ENCODE measurements at regions of chr5 and their contacts with region 1.

Region 1: GRCh38 chr5:56358703-56359681 is 125.9 kb upstream of the ANKRD55 start:
- DNase-seq: peak; percentile 85
- H3K4me3 Mint-ChIP-seq: peak overlapping the region; percentile 24
- H3K27ac Mint-ChIP-seq: peak overlapping the region; percentile 87
- H3K4me1 Mint-ChIP-seq: peaks cover 55% of the 10 kb centered on the region
- H3K27me3 Mint-ChIP-seq: no peaks in the 10 kb centered on the region
- CTCF ChIP-seq: no peak

Region 2: GRCh38 chr5:56270568-56271392 is 88.2 kb before region 1 on chr5:
- CTCF ChIA-PET with region 1: interaction called, 4 read pairs
- intact Hi-C with region 1: loop called (anchors 2 kb)
- DNase-seq: peak; percentile 88
- H3K4me3 Mint-ChIP-seq: no peak overlapping the region
- H3K27ac Mint-ChIP-seq: peak overlapping the region; percentile 81
- H3K4me1 Mint-ChIP-seq: peaks cover 25% of the 10 kb centered on the region
- H3K27me3 Mint-ChIP-seq: no peaks in the 10 kb centered on the region
- CTCF ChIP-seq: peak; percentile 95

Region 3: GRCh38 chr5:56328753-56329560 is 30.0 kb before region 1 on chr5:
- CTCF ChIA-PET with region 1: no interaction called
- intact Hi-C with region 1: loop called (anchors 2 kb)
- DNase-seq: peak; percentile 47
- H3K4me3 Mint-ChIP-seq: peak overlapping the region; percentile 9
- H3K27ac Mint-ChIP-seq: peak overlapping the region; percentile 90
- H3K4me1 Mint-ChIP-seq: peaks cover 67% of the 10 kb centered on the region
- H3K27me3 Mint-ChIP-seq: no peaks in the 10 kb centered on the region
- CTCF ChIP-seq: no peak

Region 4: DNA sequence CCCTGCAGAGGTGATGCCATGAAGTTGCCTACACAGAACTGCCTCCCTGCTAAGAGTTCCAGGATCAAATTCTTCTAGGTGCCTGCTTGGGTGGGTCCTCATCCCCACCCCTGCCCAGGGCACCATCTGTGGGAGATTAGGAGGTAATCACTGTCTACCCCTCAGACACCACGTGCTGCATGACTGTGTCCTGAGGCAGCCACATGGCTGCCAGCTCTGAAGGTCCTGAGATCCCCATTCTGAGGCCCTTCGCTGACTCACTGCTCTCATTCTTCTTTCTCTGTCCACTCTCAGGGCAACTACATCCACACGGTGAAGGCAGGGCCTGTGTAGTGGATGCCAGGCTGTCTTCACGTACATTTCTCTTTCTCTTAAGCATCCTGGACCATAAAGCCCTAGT is 97.0 kb after region 1 on chr5:
- CTCF ChIA-PET with region 1: no interaction called
- intact Hi-C with region 1: no loop called
- DNase-seq: no peak
- H3K4me3 Mint-ChIP-seq: no peak overlapping the region
- H3K27ac Mint-ChIP-seq: no peak overlapping the region
- H3K4me1 Mint-ChIP-seq: peaks cover 19% of the 10 kb centered on the region
- H3K27me3 Mint-ChIP-seq: no peaks in the 10 kb centered on the region
- CTCF ChIP-seq: no peak

Region 5: GRCh38 chr5:56479696-56480077 is 120.7 kb after region 1 on chr5:
- CTCF ChIA-PET with region 1: no interaction called
- intact Hi-C with region 1: loop called (anchors 5 kb)
- DNase-seq: no peak
- H3K4me3 Mint-ChIP-seq: peak overlapping the region; percentile 68
- H3K27ac Mint-ChIP-seq: peak overlapping the region; percentile 73
- H3K4me1 Mint-ChIP-seq: peaks cover 31% of the 10 kb centered on the region
- H3K27me3 Mint-ChIP-seq: no peaks in the 10 kb centered on the region
- CTCF ChIP-seq: no peak

Region 6: DNA sequence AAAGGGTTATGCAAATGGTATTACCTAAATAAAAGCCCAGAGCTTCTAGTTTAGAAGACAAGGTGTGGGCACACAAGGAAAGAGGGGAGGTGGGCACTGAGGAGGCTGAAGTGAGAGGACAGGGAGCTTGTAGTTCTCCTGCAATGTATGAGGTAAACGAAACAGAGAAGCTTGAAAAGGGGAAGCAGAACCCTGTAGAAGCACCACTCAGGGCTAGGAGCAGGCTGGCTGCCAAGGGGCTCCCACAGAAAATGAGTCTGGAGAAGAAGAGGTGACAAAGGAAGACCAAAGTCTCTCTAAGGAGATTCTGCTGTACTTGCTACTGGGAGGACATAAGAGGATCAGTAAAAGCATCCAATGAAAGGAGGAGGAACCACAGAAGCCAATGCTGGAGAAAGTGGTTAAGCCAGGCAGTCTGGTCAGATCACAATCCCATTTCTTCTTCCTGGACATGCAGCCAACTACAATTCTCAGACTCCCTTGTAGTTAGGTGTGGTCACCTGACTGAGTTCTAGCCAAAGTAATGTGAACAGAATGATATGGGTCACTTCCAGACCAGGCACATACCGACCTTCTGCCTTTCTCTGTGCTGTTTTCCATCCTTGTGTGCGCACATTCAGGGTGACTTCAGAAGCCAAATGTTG is 281.9 kb after region 1 on chr5:
- CTCF ChIA-PET with region 1: interaction called, 3 read pairs
- intact Hi-C with region 1: loop called (anchors 1 kb)
- DNase-seq: peak; percentile 71
- H3K4me3 Mint-ChIP-seq: peak overlapping the region; percentile 63
- H3K27ac Mint-ChIP-seq: peak overlapping the region; percentile 97
- H3K4me1 Mint-ChIP-seq: peaks cover 70% of the 10 kb centered on the region
- H3K27me3 Mint-ChIP-seq: no peaks in the 10 kb centered on the region
- CTCF ChIP-seq: no peak

Region 7: GRCh38 chr5:56838409-56839039 is 479.5 kb after region 1 on chr5:
- CTCF ChIA-PET with region 1: interaction called, 3 read pairs
- intact Hi-C with region 1: loop called (anchors 2 kb)
- DNase-seq: no peak
- H3K4me3 Mint-ChIP-seq: peak overlapping the region; percentile 53
- H3K27ac Mint-ChIP-seq: peak overlapping the region; percentile 57
- H3K4me1 Mint-ChIP-seq: peaks cover 71% of the 10 kb centered on the region
- H3K27me3 Mint-ChIP-seq: no peaks in the 10 kb centered on the region
- CTCF ChIP-seq: peak; percentile 43